Right ventricle myocardium superior (tissue), 1 donor: ENCODE measurements at regions of chr1 and their contacts with region 1.

Region 1: DNA sequence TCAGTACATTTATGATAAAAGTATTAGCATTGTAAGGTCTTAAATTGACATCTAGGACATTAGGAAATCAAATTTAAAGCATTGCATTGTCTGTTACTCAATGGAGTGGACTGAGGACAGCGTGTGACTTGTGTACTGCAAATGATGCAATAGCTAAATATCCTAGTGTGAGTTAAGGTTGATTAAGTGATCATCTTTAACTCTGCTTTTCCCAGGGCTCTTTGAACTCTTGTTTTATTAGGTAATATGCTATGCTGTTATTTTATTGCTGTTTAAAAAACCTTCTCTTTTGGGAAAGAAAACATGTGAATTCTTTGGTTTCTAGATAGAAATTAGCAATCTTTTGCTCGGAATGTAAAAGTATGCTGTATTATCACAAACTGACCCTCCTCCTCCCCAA is 38.6 kb downstream of the NFIA start:
- DNase-seq: no peak
- ATAC-seq: peak; percentile 80

Region 2: GRCh38 chr1:60589916-60590315 is 531.1 kb before region 1 on chr1:
- intact Hi-C with region 1: no loop called
- DNase-seq: no peak
- ATAC-seq: no peak

Region 3: DNA sequence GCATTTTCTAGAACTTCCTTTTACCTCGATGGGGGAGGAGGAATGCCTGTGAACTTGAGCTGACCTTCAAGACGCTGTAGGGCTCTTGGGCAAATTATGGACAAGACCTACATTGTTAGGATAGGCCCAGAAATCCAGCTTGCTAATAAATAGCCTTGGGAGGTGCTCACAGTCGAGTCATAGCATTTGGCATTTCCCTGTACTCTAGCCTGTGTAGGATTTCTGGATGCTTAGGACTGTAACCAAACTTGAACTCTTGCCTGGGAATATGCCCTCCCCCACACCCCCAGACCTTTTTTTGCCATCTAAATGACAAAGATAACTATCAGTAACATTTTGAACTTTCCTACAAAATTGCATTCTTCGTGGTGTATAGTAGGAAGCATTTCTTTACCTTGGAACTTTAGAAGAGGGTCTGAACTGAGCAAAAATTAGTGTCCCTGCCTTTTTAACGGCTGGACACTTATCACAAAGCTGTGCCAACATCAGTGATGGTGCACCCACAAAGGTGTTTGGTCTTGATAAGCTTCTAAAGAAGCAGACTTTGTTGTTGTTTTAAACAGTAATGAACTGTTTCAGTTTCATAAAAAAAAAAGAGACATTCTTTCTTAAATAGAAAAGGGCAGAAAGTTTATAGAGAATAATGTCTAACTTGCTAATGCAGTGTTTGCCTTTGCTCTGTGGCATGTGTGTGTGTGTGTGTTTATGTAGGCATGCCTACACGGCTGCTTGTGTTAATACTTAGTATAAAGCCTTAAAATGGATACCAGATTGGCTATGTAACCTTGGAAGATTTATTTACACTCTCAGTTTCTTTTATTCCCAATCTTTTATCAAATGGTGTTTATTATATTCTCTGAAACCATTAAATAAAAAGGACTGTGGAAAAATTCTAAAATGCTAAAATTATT is 49.6 kb after region 1 on chr1:
- intact Hi-C with region 1: loop called (anchors 10 kb)
- DNase-seq: no peak
- ATAC-seq: no peak